Colonic mucosa (tissue), 4 donors: ENCODE measurements at regions of chr12 and their contacts with region 1.

Region 1: GRCh38 chr12:62435303-62436163 is 31.1 kb upstream of the MON2 start:
- DNase-seq: peak; percentile 50
- H3K4me3 ChIP-seq: peak overlapping the region; percentile 42
- H3K27ac ChIP-seq: no peak overlapping the region
- H3K4me1 ChIP-seq: no peaks in the 10 kb centered on the region
- H3K27me3 ChIP-seq: no peaks in the 10 kb centered on the region
- CTCF ChIP-seq: peak; percentile 12

Region 2: DNA sequence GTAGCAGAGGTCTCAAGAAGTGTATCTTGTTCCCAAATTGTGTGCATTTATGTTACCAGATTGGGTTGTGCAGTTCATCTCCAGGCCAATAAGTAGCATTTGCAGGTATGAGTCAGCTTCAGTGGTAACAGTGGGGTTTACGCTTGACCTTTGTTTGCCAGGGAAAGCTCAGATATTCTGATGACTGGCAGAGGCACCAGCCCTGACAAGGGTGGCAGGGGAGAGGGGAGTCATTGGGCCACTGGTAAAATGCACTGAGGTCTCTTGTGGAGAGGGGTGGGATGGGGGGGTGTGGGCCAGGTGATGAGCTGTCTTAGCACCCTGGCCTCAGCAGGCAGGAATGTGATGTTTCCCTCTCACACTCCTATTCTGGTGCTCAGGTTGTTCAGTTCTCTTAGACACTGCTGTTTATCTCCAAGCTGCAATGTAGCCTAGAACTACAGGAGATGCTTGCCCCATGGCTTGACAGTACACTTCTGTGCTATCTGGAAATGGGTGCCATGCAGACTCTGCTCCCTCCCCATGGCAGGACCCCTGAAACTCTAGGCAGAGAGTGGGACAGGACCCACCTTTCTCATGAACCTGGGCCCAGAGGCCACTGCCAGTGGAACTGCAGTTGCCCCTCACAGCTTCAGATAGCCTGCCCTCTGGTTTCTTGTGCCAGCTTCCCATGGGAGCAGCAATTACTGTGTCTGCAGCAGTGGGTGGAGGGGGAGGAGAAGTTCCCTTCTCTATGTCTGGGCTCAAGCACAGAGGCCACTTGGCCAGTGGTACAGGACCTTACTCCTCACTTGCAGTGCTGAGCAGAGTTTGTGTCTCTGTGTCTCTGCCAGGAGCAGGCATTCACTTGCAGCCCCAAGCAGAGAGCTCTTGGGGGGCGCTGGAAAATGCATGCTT is 143.4 kb before region 1 on chr12:
- intact Hi-C with region 1: no loop called
- DNase-seq: no peak
- H3K4me3 ChIP-seq: no peak overlapping the region
- H3K27ac ChIP-seq: no peak overlapping the region
- H3K4me1 ChIP-seq: no peaks in the 10 kb centered on the region
- H3K27me3 ChIP-seq: no peaks in the 10 kb centered on the region
- CTCF ChIP-seq: no peak

Region 3: DNA sequence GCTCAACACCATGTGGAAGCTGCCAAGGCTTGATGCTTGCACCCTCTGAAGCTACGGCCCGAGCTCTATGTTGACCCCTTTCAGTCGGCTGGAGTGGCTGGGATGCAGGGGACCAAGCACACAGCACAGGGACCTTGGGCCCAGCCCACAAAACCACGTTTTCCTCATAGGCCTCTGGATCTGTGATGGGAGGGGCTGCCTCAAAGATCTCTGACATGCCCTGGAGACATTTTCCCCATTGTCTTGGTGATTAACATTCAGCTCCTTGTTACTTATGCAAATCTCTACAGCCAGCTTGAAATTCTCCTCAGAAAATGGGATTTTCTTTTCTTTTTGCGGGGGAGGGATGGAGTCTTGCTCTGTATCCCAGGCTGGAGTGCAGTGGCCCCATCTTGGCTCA is 77.4 kb after region 1 on chr12:
- intact Hi-C with region 1: no loop called
- DNase-seq: no peak
- H3K4me3 ChIP-seq: no peak overlapping the region
- H3K27ac ChIP-seq: no peak overlapping the region
- H3K4me1 ChIP-seq: no peaks in the 10 kb centered on the region
- H3K27me3 ChIP-seq: no peaks in the 10 kb centered on the region
- CTCF ChIP-seq: no peak

Region 4: GRCh38 chr12:62575036-62575435 is 139.5 kb after region 1 on chr12:
- intact Hi-C with region 1: loop called (anchors 5 kb)
- DNase-seq: no peak
- H3K4me3 ChIP-seq: no peak overlapping the region
- H3K27ac ChIP-seq: no peak overlapping the region
- H3K4me1 ChIP-seq: no peaks in the 10 kb centered on the region
- H3K27me3 ChIP-seq: no peaks in the 10 kb centered on the region
- CTCF ChIP-seq: no peak

Region 5: GRCh38 chr12:62799126-62799736 is 363.7 kb after region 1 on chr12:
- intact Hi-C with region 1: loop called (anchors 5 kb)
- DNase-seq: peak; percentile 69
- H3K4me3 ChIP-seq: no peak overlapping the region
- H3K27ac ChIP-seq: no peak overlapping the region
- H3K4me1 ChIP-seq: no peaks in the 10 kb centered on the region
- H3K27me3 ChIP-seq: no peaks in the 10 kb centered on the region
- CTCF ChIP-seq: peak; percentile 88

Region 6: GRCh38 chr12:62891805-62892549 is 456.4 kb after region 1 on chr12:
- intact Hi-C with region 1: no loop called
- DNase-seq: no peak
- H3K4me3 ChIP-seq: no peak overlapping the region
- H3K27ac ChIP-seq: no peak overlapping the region
- H3K4me1 ChIP-seq: no peaks in the 10 kb centered on the region
- H3K27me3 ChIP-seq: no peaks in the 10 kb centered on the region
- CTCF ChIP-seq: no peak